ENCODE measurements at regions of chr22 and their contacts with region 1.

Region 1: DNA sequence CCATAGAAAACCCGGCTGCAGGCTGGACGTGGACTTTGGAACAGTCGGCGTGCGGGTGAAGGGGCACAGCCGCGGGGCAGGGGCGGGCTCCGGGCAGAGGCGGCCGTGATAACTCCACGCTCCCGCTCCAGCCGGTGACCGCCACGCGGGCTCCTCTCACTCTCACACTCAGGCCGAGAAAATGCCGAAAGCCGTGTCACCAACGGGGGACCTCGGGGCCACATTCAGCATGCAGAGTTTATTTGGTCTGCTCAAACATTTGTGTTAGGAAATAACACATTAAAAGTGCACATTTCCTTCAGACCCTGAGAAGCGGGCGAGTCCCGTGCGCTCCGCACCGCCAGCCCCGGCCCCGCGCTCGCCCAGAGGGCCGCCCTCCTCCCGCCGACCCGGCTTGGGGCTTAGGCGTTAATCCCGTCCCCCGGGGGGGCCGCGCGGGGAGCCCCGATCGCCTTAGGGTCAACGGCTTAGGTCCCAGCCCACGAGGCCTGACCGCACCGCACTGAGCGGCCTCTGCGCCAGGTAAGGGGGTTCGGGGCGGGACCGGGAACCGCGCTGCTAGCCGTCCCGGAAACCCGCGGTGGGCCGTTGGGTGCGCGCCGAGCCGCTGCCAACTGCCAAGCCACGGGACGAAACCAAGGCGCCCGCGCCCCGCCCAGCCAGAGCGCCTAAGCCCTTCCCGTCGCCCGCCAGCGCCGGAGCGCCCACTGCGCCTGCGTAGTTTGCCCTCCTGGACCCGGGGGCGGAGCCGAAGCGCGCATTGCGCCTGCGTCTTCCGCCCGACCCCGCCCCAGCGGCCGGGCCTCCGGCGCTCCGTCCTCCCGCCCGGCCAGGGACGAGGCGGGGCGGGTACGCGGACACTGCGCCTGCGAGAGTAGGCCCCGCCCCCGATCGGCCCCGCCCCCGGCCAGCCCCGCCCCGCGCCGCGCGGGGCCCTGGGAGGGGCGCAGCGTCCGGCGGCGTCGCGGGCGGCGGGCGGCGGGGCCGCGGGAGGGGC is at the start of gene ZBED4:
- DNase-seq: peak; percentile 99
- H3K4me3 Mint-ChIP-seq: peak within 1 kb of the TSS; percentile 86
- H3K27ac Mint-ChIP-seq: peak within 1 kb of the TSS; percentile 80
- H3K4me1 Mint-ChIP-seq: peaks cover 36% of the 10 kb centered on the region
- H3K27me3 Mint-ChIP-seq: peaks cover 3% of the 10 kb centered on the region
- total RNA-seq, gene ZBED4: 18.4 TPM

Region 2: DNA sequence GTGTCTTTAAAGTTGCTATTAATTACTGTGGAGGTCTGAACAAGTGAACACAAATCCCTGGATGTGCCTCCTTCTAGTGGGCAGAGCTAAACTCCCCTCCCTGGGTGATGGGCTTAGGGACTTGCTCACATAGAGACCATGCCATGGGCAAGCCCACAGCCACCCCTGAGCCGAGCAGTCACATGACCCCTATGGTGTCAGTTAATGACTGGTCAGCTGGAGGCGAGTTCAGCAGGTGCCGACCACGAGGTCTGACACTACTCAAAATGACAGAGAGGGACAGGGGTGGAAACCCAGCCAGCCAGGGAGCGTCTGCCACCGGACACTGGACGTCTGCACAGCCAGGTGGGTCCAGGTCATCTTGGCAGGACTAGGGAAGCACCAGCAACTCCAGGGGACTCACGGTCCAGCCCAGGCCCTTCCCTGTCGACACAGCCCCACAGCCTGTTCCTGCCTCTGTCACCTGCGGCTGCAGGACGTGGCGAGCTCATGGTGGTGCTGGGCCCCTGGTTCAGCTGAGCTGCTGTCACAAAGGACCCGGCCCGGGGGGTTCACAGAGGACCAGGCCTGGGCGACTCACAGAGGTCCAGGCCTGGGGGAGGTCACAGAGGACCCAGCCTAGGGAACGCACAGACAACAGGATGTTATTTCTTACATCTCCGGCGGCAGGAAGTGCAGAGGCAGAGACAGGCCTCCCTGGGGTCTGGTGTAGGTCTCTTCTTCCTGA is 160.5 kb before region 1 on chr22:
- CTCF ChIA-PET with region 1: no interaction called
- POLR2A ChIA-PET with region 1: no interaction called
- intact Hi-C with region 1: no loop called
- DNase-seq: no peak
- H3K4me3 Mint-ChIP-seq: no peak overlapping the region
- H3K27ac Mint-ChIP-seq: no peak overlapping the region
- H3K4me1 Mint-ChIP-seq: no peaks in the 10 kb centered on the region
- H3K27me3 Mint-ChIP-seq: peaks cover 9% of the 10 kb centered on the region

Region 3: DNA sequence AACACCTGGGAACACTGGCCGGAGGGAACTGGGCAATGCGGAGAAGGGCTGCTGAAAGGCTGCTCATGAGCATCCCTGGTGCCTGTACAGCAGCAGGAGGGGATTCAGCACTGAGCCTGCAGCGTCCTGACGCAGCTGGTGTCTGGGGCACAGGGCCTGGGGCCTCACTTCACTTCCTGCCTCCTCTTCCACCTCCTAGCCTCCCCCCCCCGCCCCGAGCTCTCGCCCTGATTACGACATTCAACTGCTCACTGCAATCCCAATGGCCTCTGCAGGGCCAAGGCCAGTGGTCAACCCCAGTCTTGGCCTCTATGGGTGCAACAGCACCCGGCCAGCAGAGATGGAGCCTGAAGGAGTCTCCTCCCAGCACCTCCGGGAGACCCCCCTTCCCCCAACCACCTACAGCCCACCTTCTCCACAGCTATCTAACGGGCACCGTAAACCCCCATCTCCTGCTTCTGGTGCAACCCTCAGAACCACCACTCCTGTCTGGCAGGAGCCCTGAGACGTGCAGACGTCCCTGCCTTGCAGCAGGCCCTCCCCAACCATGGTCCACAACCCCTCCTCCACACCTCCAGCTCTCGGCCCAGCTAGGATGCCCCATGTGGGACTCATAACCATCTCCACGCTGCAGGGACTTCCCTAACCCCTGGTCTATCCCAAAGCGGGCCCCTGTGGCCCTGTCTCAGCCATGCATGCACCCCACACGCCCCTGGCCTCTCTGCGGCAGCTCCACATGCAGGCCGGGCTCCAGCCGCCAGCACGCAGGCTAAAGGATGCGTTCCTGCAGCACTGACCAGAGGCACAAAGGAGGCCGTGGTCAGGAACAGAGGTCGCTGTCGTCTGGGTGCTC is 63.7 kb before region 1 on chr22:
- CTCF ChIA-PET with region 1: no interaction called
- POLR2A ChIA-PET with region 1: no interaction called
- intact Hi-C with region 1: no loop called
- DNase-seq: peak; percentile 58
- H3K4me3 Mint-ChIP-seq: no peak overlapping the region
- H3K27ac Mint-ChIP-seq: peak overlapping the region; percentile 74
- H3K4me1 Mint-ChIP-seq: peaks cover 47% of the 10 kb centered on the region
- H3K27me3 Mint-ChIP-seq: no peaks in the 10 kb centered on the region

Region 4: DNA sequence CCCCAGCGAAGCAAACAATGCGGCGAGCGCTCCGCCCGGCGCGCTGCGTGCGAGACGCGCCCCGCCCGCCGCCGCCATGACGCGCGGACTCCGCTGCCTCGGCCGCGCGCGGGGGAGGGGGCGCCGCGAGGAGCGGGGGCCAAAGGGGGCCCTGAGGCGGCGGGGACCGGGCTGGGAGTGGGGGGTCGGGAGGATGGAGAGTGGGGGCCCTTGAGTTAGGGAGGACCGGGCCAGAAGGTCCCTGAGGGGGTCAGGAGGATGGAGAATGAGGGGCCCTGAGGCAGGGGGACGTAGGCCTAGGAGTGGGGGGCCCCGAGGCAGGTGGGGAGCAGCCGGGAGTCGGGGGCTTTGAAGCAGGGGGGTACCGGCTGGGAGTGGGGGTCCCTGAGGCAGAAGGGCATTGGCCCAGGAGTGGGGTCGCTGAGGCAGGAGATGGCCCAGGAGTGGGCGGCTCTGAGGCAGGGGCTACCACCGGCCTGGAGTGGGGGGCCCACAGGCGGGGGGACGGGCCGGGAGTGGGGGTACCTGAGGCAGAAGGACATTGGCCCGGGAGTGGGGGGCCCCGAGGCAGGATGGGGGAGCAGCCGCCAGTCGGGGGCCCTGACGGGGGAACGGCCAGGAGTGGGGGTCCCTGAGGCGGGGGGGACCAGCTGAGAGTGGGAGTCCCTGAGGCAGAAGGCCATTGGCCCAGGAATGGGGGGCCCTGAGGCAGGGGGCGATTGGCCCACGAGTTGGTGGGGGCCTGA is 25.2 kb before region 1 on chr22 and contains the start of gene BRD1:
- CTCF ChIA-PET with region 1: interaction called, 3 read pairs
- POLR2A ChIA-PET with region 1: interaction called, 11 read pairs
- intact Hi-C with region 1: loop called (anchors 2 kb)
- DNase-seq: peak; percentile 53
- H3K4me3 Mint-ChIP-seq: peak within 1 kb of the TSS; percentile 90
- H3K27ac Mint-ChIP-seq: peak within 1 kb of the TSS; percentile 92
- H3K4me1 Mint-ChIP-seq: peaks cover 52% of the 10 kb centered on the region
- H3K27me3 Mint-ChIP-seq: no peaks in the 10 kb centered on the region
- total RNA-seq, gene BRD1: 27.5 to 30.2 TPM

Region 5: DNA sequence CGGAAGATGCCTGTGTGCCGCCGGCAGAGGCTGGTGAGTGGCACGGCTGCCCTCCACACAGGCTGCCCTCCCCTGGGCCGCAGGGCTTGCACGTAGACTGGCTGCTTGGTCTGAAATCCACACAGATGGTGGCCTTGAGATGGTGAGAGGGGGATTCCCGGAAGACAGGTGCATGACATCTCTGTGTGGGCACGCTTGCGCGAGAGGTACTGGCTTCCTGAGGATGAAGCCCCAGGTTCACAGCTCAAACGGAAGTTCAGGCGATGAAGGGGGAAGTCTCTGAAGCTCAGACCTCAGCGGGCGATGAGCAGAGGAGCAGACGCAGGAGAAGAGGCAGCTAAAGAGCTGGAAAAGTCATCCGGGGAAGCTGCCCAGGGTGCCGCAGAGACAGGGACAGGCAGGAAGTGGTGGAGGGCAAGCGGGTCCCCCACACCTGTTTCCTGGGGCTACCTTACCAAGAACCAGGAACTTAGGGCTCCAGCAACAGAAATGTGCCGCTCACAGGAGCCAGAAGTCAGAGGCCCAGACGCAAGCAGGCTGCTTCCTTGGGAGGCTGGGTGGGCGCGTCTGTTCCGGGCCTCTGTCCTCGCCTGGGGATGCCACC is 72.4 kb after region 1 on chr22:
- CTCF ChIA-PET with region 1: no interaction called
- POLR2A ChIA-PET with region 1: no interaction called
- intact Hi-C with region 1: loop called (anchors 2 kb)
- DNase-seq: peak; percentile 77
- H3K4me3 Mint-ChIP-seq: peak overlapping the region; percentile 68
- H3K27ac Mint-ChIP-seq: peak overlapping the region; percentile 88
- H3K4me1 Mint-ChIP-seq: peaks cover 28% of the 10 kb centered on the region
- H3K27me3 Mint-ChIP-seq: no peaks in the 10 kb centered on the region

Measured in activated CD4-positive, alpha-beta memory T cell treated with anti-CD3 and anti-CD28 coated beads for 36 hours (primary cell).